Spleen (tissue), 13 donors: ENCODE measurements at regions of chr12 and their contacts with region 1.

Region 1: DNA sequence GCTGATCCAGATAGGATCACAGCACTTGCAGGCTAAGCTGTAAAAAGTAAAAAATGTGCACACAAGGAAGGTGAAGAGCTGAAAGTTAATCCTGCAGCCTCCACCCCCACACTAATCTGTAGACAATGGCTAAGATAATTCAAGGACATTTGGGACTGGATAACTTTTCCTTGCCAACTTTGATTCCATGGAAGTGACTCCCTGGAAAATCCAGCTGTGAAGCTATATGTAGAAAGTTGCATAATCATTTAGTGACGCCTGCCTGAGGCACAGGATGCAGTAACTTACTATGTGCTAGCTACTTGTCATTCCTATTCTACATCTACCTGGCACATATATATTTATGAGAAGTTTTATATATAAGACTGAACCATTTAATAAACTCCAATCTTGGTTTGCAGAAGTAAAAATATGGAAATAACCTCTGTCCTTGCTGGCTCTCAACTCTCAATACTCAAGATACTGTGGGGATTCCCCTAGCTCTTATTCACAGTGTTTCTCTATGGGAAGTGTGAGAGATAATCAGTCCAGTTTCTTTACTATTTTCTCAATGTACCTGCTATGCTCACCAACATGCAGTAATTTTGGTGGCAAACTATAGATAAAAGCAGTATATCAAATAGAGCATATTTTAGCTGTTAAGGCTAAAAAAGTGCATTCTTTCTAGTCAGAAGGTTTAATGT is 14.8 kb downstream of the LDHB start:
- DNase-seq: no peak
- H3K4me3 ChIP-seq: no peak overlapping the region
- H3K27ac ChIP-seq: no peak overlapping the region
- H3K4me1 ChIP-seq: peaks cover 0 to 26% (median 10%) of the 10 kb centered on the region in 6 donors
- H3K27me3 ChIP-seq: no peaks in the 10 kb centered on the region
- CTCF ChIP-seq: no peak
- POLR2A ChIP-seq: no peak

Region 2: DNA sequence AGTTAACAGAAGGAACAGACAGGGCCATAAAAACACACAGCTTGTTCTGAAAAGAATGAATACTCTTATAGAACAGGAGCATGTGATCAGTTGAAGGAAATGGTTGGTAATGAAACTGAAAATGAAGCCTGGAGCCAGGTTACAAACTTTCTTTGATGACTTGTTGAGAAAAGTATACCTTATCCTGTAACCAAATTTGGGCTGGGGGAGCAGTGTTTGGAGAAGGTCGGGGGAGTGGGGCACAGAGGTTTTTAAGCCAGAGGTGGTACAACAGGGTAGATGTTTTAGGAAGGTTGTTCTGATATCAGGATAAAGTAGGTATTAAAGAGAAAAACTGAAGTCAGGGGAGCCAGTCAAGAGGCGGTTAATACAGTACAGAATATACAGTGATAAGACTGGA is 133.1 kb before region 1 on chr12:
- intact Hi-C with region 1: loop called (anchors 10 kb)
- DNase-seq: no peak
- H3K4me3 ChIP-seq: no peak overlapping the region
- H3K27ac ChIP-seq: peak overlapping the region in 4 of 8 donors; percentile 26 to 38 (median 34)
- H3K4me1 ChIP-seq: peaks cover 0 to 43% (median 12%) of the 10 kb centered on the region in 6 donors
- H3K27me3 ChIP-seq: no peaks in the 10 kb centered on the region
- CTCF ChIP-seq: no peak
- POLR2A ChIP-seq: no peak